Psoas muscle (tissue), 8 donors: ENCODE measurements at regions of chr6 and their contacts with region 1.

Region 1: GRCh38 chr6:111605100-111605751 is 452 bp downstream of the TRAF3IP2 start:
- DNase-seq: peak; percentile 83 to 92
- ATAC-seq: peak; percentile 70 to 77 (median 73)
- H3K4me3 ChIP-seq: peak overlapping the region; percentile 78
- H3K27ac ChIP-seq: peak overlapping the region; percentile 99
- H3K4me1 ChIP-seq: peaks cover 43% of the 10 kb centered on the region
- H3K27me3 ChIP-seq: no peaks in the 10 kb centered on the region
- CTCF ChIP-seq: no peak

Region 2: GRCh38 chr6:111565326-111566221 is 39.7 kb before region 1 on chr6:
- intact Hi-C with region 1: loop called (anchors 5 kb)
- DNase-seq: no peak
- ATAC-seq: peak in 2 of 4 donors; percentile 29 to 31
- H3K4me3 ChIP-seq: no peak overlapping the region
- H3K27ac ChIP-seq: peak overlapping the region; percentile 41
- H3K4me1 ChIP-seq: peaks cover 48% of the 10 kb centered on the region
- H3K27me3 ChIP-seq: no peaks in the 10 kb centered on the region
- CTCF ChIP-seq: no peak

Region 3: GRCh38 chr6:111642463-111643158 is 37.4 kb after region 1 on chr6:
- intact Hi-C with region 1: loop called (anchors 5 kb)
- DNase-seq: peak; percentile 59 to 80
- ATAC-seq: peak; percentile 54 to 79 (median 68)
- H3K4me3 ChIP-seq: no peak overlapping the region
- H3K27ac ChIP-seq: no peak overlapping the region
- H3K4me1 ChIP-seq: peaks cover 4% of the 10 kb centered on the region
- H3K27me3 ChIP-seq: no peaks in the 10 kb centered on the region
- CTCF ChIP-seq: peak; percentile 61

Region 4: DNA sequence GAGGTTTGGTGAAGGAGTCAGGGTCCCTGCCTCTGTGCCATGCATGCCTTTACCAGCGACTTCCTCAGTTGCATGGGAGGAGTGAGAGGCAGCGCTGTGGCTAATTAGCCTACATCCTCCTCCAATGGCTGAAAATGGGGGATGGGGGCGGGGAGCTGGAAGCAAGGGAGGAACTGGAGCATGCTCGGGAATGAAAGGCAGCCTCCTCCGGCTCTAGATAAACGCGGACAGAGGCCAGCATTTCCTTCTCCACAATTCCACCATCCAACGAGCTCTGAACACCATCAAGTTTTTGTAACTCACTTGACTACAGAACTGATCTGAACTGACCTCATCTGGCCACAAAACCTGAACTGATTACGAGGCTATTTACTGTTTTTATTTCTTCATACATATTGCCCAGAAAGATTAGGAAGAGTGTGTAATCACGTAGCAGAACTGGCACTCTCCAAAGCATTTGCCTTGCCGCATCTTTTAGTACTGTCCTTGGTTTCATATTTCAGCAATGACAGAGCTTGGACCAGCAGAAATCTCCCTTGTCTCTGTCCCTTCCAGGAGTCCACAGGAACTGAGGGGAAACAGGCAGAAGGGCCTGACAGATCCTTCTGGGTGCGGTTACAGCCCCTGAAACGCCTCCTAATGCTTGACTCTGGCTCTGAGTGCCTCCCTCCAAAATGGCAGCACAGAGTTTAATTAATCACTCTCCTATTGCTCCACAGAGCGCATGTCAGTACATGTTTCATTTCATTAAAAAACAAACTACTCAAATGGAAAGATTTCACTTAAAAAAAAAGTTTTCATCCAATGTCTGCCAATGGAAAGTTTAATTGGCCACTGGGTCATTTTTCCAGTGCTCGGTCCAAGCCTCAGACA is 58.7 kb after region 1 on chr6:
- intact Hi-C with region 1: loop called in 1 of 2 experiments (anchors 5 kb)
- DNase-seq: peak; percentile 66 to 78
- ATAC-seq: peak; percentile 53 to 78 (median 73)
- H3K4me3 ChIP-seq: peak overlapping the region; percentile 55
- H3K27ac ChIP-seq: peak overlapping the region; percentile 86
- H3K4me1 ChIP-seq: peaks cover 77% of the 10 kb centered on the region
- H3K27me3 ChIP-seq: no peaks in the 10 kb centered on the region
- CTCF ChIP-seq: no peak